Head of caudate nucleus (tissue), 42 donors: ENCODE measurements at regions of chr17 and their contacts with region 1.

Region 1: DNA sequence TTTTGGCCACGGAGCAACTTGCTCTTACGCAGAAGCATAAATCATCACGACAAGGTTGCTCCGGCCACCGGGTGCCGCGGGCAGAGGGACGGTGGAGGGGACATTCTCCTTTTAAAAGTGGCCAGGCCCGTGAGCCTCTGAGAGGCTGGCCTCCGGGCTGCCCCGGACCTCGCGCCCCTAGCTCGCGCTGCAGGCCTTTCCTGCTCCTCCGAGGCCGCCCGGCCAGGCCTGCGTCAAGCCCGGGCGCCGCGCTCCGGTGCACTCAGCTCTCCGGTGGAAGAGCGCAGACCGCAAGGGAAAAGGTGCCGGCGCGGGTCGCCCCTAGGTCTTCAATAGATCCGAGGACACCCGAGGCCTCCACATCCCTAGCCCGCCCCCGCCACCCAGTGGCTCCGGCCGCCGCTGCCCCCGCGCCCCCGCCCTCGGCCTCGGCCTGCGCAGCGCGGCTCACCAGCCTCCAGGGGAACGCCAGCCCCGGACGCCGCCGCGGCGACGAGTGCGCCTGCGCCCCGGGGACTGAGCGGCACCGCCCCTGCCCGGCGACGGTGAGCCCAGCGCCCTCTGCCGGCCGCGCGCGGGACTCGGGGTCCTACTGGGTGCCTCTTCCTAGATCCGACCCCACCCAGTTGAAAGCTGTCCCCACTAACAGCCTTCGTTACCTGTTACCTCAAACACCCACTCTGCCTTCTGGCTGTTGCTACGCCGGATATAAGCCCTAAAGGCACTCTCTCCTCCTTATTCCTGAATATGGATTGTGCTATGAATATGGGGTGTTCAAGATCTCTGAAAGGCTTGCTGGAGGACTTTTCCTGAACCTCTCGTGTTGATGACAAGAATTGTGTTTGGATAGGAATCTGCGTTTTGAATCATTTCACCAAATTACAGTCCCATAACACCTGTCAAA is at the start of gene LYRM9:
- DNase-seq: peak; percentile 76 to 97 (median 93)

Region 2: GRCh38 chr17:27996208-27997043 is 103.3 kb after region 1 on chr17:
- intact Hi-C with region 1: loop called (anchors 5 kb)
- DNase-seq: peak in 17 of 42 donors; percentile 8 to 66 (median 41)

Region 3: GRCh38 chr17:28041068-28041843 is 148.1 kb after region 1 on chr17:
- intact Hi-C with region 1: loop called (anchors 5 kb)
- DNase-seq: peak; percentile 98 to 100 (median 100)